Endothelial cell of umbilical vein (primary cell): ENCODE measurements at regions of chr9 and their contacts with region 1.

Region 1: GRCh38 chr9:38068866-38069629 is at the start of gene SHB:
- DNase-seq: peak; percentile 63
- H3K4me3 ChIP-seq: peak within 1 kb of the TSS; percentile 63 to 76 (median 71)
- H3K27ac ChIP-seq: peak within 1 kb of the TSS; percentile 92
- H3K4me1 ChIP-seq: peaks cover 47% of the 10 kb centered on the region
- H3K27me3 ChIP-seq: no peaks in the 10 kb centered on the region
- CTCF ChIP-seq: peak in 1 of 2 donors; percentile 0
- POLR2A ChIP-seq: peak; percentile 84
- total RNA-seq, gene SHB: 22.3 and 24.9 TPM in 2 replicates

Region 2: DNA sequence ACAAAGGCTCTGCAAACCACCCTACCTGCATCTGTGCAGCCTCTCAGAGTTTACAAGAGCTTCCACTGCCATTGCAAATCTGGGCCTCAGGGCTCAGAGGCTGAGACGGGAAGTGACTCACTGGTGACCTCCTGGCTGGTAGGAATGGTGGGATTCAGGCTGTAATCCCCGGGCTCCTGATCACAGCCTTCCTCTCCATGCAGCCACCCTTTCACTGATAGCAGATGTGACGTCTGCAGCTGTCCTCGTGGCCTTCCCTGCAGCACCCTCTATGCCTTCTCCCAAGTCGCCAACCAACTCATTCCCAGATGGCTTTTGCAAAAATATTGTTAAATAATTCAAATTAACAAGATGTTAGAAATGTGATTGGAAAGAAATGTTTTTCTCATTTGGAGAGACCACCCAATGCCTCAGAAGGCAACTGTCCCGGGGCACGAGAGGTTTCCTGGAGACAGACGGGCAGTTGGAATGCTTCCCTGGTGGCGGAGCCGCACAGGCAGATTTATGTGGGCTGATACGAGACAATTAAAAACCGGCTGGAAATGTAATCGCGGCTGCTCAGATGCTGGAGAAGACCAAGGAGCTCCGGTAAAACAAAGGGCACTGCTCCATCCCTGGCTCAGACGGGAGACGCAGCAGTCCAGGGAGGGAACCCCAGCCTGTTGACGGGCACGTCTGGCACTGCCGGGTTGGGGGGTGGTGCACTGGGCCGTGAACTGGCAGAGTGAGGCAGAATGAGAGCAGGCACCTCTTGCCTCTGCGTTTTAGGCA is 130.7 kb before region 1 on chr9:
- CTCF ChIA-PET with region 1: interaction called, 13 read pairs
- POLR2A ChIA-PET with region 1: no interaction called
- dilution Hi-C with region 1: no loop called
- intact Hi-C with region 1: no loop called
- DNase-seq: peak; percentile 90
- H3K4me3 ChIP-seq: no peak overlapping the region
- H3K27ac ChIP-seq: peak overlapping the region; percentile 77
- H3K4me1 ChIP-seq: peaks cover 39% of the 10 kb centered on the region
- H3K27me3 ChIP-seq: no peaks in the 10 kb centered on the region
- CTCF ChIP-seq: no peak
- POLR2A ChIP-seq: no peak

Region 3: GRCh38 chr9:37963936-37964739 is 104.9 kb before region 1 on chr9:
- CTCF ChIA-PET with region 1: interaction called, 11 read pairs
- POLR2A ChIA-PET with region 1: no interaction called
- dilution Hi-C with region 1: no loop called
- intact Hi-C with region 1: loop called (anchors 5 kb)
- DNase-seq: peak; percentile 94
- H3K4me3 ChIP-seq: no peak overlapping the region
- H3K27ac ChIP-seq: peak overlapping the region; percentile 67
- H3K4me1 ChIP-seq: peaks cover 41% of the 10 kb centered on the region
- H3K27me3 ChIP-seq: no peaks in the 10 kb centered on the region
- CTCF ChIP-seq: no peak
- POLR2A ChIP-seq: no peak

Region 4: DNA sequence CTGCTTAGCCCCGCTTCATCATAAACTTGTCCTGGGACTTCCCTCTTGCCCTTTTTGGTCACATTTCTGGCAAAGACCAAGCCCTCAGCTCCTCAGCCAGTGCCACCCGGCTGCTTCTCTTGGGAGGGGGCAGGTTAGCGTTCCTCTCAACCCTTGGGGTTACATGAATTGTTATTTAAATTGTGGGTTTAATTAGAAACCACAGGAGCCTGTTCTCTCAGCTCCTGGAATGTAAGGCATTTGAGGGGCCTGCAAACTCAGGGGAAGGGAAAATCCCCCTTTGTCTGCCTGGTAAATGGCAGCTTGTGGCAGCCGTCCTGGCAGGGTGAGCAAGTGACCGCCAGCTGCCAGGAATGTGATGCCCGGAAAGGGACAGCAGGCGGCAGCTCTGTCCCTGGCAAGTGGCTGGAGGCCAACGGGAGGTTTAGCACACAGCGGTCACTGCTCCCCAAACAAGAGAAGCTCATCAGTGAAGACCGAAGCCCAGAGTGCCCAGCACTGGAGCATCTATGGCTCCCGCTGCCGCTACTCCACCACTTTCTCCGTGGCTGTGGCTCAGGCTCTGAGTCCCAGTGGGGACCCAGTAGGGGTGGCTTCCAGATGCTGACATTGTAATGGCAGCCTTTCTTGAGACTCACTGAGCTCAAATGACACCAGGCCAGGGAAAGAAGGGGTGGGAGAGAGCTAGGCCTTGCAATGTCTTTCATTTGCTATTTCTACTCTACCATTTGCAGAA is 51.7 kb before region 1 on chr9:
- CTCF ChIA-PET with region 1: interaction called, 7 read pairs
- POLR2A ChIA-PET with region 1: no interaction called
- dilution Hi-C with region 1: no loop called
- intact Hi-C with region 1: loop called (anchors 2 kb)
- DNase-seq: no peak
- H3K4me3 ChIP-seq: no peak overlapping the region
- H3K27ac ChIP-seq: peak overlapping the region; percentile 34
- H3K4me1 ChIP-seq: peaks cover 57% of the 10 kb centered on the region
- H3K27me3 ChIP-seq: no peaks in the 10 kb centered on the region
- CTCF ChIP-seq: peak in 1 of 2 donors; percentile 11
- POLR2A ChIP-seq: no peak

Region 5: DNA sequence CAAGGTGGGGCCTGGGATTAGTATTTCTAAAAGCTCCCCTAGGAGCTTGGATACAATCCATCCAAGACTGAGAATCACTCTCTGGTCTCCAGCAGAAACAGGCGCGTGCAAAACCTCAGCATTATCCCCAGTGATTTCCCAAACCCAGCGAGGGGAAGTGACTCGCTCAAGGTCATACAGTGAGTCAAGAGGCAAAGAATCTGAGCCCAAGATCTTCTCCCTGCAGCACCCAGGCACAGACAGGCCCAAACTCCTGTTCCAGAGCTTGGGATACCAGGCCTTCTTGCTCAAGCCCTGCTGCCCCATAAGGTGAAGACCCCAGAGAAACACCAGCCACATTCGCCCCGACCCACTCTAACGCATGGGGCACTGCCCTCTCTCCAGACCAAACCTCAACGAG is 33.2 kb before region 1 on chr9:
- CTCF ChIA-PET with region 1: interaction called, 4 read pairs
- POLR2A ChIA-PET with region 1: no interaction called
- dilution Hi-C with region 1: no loop called
- intact Hi-C with region 1: loop called (anchors 2 kb)
- DNase-seq: peak; percentile 56
- H3K4me3 ChIP-seq: no peak overlapping the region
- H3K27ac ChIP-seq: peak overlapping the region; percentile 66
- H3K4me1 ChIP-seq: peaks cover 59% of the 10 kb centered on the region
- H3K27me3 ChIP-seq: no peaks in the 10 kb centered on the region
- CTCF ChIP-seq: no peak
- POLR2A ChIP-seq: no peak

Region 6: GRCh38 chr9:38079461-38080031 is 10.5 kb after region 1 on chr9:
- CTCF ChIA-PET with region 1: interaction called, 4 read pairs
- POLR2A ChIA-PET with region 1: no interaction called
- dilution Hi-C with region 1: no loop called
- intact Hi-C with region 1: loop called (anchors 1 kb)
- DNase-seq: peak; percentile 82
- H3K4me3 ChIP-seq: no peak overlapping the region
- H3K27ac ChIP-seq: peak overlapping the region; percentile 19
- H3K4me1 ChIP-seq: peaks cover 17% of the 10 kb centered on the region
- H3K27me3 ChIP-seq: no peaks in the 10 kb centered on the region
- CTCF ChIP-seq: no peak
- POLR2A ChIP-seq: no peak

Region 7: DNA sequence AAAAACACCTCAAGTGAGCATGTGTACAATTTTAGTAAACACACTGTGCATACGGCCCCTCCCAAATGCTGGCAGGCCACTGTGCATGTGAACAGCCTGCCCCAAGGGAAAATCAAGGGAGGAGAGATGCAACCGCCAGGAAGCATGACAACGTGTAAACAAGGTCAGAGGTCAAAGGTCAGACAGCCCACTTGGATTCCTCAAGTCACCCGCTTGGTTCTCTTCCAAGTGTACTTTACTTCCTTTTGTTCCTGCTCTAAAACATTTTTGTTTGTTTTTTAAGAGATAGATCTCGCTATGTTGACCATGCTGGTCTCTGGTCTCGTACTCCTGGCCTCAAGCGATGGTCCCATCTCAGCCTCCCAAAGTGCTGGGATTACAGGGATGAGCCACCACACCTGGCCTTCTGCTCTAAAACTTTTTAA is 126.7 kb after region 1 on chr9:
- CTCF ChIA-PET with region 1: no interaction called
- POLR2A ChIA-PET with region 1: no interaction called
- dilution Hi-C with region 1: no loop called
- intact Hi-C with region 1: no loop called
- DNase-seq: no peak
- H3K4me3 ChIP-seq: no peak overlapping the region
- H3K27ac ChIP-seq: no peak overlapping the region
- H3K4me1 ChIP-seq: no peaks in the 10 kb centered on the region
- H3K27me3 ChIP-seq: peaks cover 2 to 7% of the 10 kb centered on the region in 2 experiments
- CTCF ChIP-seq: no peak
- POLR2A ChIP-seq: no peak